Posterior vena cava (tissue), 2 donors: ENCODE measurements at regions of chr10 and their contacts with region 1.

Region 1: DNA sequence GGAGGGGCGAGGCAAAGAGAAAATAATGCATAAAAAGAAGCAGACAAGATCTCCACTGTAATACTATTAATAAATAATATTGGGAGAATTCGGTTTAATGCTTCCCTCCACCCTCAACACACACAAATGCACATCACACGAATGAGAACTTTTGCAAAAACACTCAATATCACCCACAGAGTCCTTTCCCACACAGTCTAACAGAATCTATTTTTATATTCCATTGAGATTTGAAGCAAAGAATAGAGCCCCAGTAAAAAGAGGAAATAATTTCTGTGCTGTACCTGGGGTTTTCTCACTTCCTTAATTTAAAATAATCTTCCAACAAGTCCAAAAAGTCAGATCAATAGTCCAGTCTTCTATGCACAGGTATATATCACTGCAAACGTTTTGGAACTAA is 17.0 kb downstream of the PIK3AP1 start:
- DNase-seq: no peak

Region 2: DNA sequence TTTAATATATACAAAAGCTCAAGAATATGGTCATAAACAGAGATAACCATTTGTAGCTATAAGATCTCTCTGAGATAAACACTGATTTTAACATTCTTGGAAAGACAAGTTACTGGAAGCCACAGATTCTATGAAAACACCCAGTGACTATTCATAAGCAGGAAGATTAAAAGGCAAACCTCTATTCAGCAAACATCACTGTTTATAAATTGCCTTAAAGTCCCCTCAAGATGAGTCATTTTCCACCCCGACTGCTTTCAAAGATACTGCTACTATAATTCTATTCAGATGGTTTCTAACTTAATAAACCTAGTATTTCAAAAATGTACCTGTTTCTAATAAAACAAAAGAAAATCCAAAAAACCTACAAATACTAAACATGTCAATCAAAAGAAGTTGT is 137.6 kb before region 1 on chr10:
- intact Hi-C with region 1: no loop called
- DNase-seq: no peak

Region 3: DNA sequence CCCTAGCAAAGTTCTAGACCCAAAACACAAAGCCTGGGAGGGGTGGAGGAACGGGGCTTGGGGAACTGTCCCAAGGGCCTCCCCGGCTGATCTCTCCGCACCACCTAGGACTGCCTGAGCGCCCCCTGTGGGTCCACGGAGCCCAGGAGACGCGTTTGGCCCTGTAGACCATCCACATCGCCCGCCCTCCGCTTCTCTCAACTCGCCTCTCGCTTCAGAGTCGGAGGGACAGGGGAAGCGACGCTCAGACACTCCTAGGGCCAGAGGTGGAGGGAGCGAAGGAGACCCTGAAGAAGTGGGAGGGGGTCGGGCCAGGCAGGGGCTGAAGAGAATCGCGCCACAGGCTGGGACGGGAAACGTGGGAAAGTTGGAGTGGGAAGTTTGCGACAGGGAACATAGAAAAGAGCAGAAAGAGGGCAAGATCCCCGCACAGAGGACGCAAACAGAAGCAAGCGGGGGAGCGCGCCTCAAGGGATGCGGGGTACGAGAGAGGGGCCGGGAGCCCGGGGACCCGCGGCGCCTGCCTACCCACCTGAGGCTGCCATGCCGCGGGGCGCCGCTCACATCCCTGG is 16.6 kb after region 1 on chr10:
- intact Hi-C with region 1: loop called in 1 of 2 experiments (anchors 1 kb)
- DNase-seq: peak; percentile 89

Region 4: DNA sequence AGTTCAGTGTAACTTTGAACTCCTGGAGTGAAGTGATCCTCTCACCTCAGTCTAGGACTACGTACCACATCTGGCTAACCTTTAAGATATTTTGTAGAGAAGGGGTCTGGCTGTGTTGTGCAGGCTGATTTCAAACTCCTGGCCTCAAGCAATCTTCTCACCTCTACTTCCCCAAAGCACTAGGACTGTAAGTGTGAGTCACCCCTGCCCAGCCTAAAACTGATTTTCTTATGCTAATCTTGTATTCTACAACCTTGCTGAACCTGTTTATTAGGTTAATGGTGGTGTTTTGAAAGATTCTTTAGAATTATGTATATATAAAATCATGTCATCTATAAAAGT is 186.8 kb after region 1 on chr10:
- intact Hi-C with region 1: no loop called
- DNase-seq: no peak